HEK293 (cell line): ENCODE measurements at regions of chr1 and their contacts with region 1.

Region 1: DNA sequence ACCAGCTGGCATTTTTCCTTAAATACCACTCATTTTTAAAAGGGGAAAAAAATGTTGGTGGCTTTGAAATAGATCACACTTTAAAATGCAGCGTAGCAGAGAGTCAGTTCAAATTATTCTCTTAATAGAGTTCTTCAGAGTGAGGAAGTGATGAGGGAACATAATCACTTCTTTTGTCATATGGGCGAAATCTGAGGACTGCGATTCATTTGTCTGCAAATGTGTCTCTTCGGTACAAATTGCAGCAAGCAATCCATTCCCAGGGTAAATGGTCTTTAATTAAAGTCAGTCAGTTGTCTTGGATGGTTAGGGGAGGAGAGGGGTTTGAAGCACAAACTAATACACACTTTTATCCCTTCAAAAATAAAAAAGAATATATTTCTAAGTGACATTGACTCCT is 86.0 kb upstream of the SELENON start:
- H3K4me3 ChIP-seq: no peak overlapping the region
- H3K27ac ChIP-seq: no peak overlapping the region
- H3K4me1 ChIP-seq: no peaks in the 10 kb centered on the region
- CTCF ChIP-seq: no peak

Region 2: GRCh38 chr1:25725490-25726130 is 11.6 kb after region 1 on chr1:
- CTCF ChIA-PET with region 1: interaction called, 11 read pairs
- POLR2A ChIA-PET with region 1: interaction called, 3 read pairs
- H3K4me3 ChIP-seq: no peak overlapping the region
- H3K27ac ChIP-seq: no peak overlapping the region
- H3K4me1 ChIP-seq: peaks cover 8% of the 10 kb centered on the region
- CTCF ChIP-seq: no peak

Region 3: DNA sequence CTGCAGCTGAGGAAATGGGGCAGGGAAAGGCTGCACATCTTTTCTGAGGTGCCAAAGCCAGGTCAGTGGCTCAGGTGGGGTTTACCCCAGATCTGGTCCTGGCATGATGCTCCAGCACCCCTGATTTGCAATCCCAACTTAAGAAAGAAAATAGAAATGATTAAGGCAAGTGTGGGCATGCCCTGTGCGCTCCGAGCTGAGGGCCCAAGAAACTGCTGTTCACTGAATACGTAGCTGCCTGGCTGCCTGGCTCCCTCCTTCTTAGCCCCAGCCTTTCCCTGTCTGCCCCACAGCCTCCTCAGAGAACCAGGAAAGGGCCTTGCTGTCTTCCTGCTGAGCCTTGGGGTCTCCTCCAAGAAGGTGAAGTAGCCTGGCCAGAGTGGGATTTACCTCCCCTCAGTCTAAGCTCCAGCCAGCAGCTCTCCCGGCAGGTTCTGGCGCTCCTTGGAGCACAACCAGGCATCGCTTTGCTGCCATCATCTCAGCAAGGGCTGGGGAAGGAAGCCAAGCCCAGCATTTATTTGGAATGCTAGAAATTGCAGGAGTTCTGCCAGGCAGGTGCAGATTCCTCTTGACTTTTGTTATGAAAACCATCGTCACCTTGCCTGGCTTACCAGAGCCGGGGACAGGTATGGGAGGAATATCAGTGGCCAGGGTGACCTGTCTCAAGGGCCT is 34.7 kb after region 1 on chr1:
- CTCF ChIA-PET with region 1: no interaction called
- POLR2A ChIA-PET with region 1: no interaction called
- H3K4me3 ChIP-seq: no peak overlapping the region
- H3K27ac ChIP-seq: no peak overlapping the region
- H3K4me1 ChIP-seq: no peaks in the 10 kb centered on the region
- CTCF ChIP-seq: no peak